Heart left ventricle (tissue), 16 donors: ENCODE measurements at regions of chr3 and their contacts with region 1.

Region 1: DNA sequence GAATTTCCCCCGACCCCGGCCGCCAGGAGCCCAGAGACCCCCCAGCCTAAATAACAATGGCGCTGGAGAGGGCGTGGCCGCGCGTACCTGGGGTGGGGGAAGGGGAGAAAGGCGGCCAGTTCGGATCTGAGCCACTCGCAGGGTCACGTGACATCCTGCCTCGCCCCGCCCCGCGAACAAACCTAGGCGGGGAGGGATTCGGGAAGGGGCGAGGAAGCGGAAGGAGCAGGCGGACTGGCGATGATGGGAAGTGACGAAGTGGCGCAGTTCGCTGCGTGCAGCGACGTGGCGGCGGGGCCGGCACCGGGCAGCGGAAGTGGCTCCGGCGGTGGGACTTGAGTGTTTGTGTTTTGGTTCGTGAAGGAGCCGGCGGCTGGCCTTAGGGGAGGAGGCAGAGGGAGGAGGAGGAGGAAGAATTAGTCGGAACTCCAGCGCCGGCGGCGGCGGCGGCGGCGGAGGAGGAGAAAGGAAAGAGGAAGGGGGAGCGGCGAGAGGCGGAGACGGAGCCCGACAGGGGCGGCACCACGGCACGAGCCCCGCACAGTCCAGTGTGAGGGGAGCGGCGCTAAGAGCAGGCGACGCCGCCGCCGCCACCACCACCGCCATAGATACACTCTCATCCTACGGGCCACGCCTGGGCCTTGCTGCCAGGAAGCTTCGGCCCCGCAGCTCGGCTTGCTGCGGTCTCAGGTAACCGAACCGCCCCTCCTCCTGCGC is at the start of gene RAB5A:
- DNase-seq: peak; percentile 98
- ATAC-seq: peak; percentile 97 to 99 (median 98)
- H3K4me3 ChIP-seq: peak within 1 kb of the TSS; percentile 65 to 99 (median 90)
- H3K27ac ChIP-seq: peak within 1 kb of the TSS; percentile 93 to 99 (median 98)
- H3K4me1 ChIP-seq: peaks cover 7 to 44% (median 25%) of the 10 kb centered on the region in 12 donors
- H3K27me3 ChIP-seq: no peaks in the 10 kb centered on the region
- CTCF ChIP-seq: no peak
- POLR2A ChIP-seq: peak in 1 of 2 donors; percentile 69
- total RNA-seq, gene RAB5A: 34.9 to 74.0 (median 61.9) TPM

Region 2: DNA sequence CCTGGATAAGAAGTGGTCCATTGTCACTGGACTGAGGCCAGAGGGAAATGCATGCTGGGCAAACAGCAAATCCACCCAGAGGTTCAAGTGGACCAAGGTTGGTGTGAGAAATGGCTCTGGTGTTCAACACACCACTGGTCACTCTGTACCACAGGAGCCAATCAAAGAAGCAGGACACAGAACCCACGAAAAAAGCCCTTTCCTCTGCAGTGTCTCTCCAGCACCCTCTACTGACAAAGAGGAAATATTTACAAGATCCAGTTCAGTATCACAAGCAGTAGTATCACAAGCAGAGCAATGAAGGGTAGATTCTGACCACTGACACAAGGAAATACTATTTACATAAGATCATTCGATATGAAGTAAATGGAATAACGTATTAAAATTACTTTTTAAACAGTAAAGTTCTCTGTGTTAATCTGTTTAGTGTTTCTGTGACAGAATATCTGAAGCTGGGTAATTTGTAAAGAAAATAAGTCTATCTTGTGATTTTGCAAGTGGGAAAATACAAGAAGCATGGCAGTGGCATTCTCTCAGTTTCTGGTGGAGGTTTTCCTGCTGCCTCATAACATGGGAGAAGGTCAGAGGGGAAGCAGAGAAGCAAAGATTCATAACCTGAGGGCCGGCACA is 403.7 kb before region 1 on chr3:
- intact Hi-C with region 1: no loop called
- DNase-seq: no peak
- ATAC-seq: peak; percentile 42 to 71 (median 58)
- H3K4me3 ChIP-seq: no peak overlapping the region
- H3K27ac ChIP-seq: no peak overlapping the region
- H3K4me1 ChIP-seq: no peaks in the 10 kb centered on the region
- H3K27me3 ChIP-seq: no peaks in the 10 kb centered on the region
- CTCF ChIP-seq: peak; percentile 32 to 62 (median 58)
- POLR2A ChIP-seq: no peak

Region 3: GRCh38 chr3:19885468-19885867 is 61.5 kb before region 1 on chr3:
- intact Hi-C with region 1: loop called in 5 of 10 experiments (anchors 5 kb)
- DNase-seq: no peak
- ATAC-seq: peak in 1 of 4 donors; percentile 29
- H3K4me3 ChIP-seq: no peak overlapping the region
- H3K27ac ChIP-seq: no peak overlapping the region
- H3K4me1 ChIP-seq: peaks cover 0 to 18% (median 8%) of the 10 kb centered on the region in 12 donors
- H3K27me3 ChIP-seq: no peaks in the 10 kb centered on the region
- CTCF ChIP-seq: peak; percentile 36 to 68 (median 48)
- POLR2A ChIP-seq: no peak

Region 4: DNA sequence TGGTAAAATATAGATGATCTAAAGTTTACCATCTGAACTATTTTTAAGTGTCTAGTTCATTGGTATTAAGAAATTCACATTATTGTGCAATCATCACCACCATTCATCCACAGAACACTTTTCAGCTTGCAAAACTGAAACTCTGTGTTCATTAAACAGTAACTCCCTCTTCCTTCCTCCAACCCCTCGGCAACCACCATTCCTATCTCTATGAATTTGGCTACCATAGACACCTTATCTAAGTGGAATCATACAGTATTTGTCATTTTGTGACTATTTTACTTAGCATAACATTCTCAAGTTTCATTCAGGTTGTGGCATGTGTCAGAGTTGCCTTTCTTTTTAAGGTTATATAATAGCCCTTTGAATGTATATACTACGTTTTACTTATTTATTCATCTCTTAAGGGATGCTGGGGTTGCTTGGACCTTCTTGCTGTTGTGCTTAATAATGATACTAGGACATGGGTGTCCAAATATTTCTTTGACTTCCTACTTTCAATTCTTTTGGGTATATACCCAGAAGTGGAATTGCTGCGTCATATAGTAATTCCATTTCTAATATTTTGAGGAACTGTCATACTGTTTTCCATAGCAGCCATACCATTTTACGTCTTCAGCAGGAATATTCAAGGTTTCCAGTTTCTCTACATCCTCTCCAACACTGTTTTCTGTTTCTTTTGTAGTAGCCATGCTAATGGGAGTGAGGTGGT is 114.1 kb after region 1 on chr3:
- intact Hi-C with region 1: no loop called
- DNase-seq: no peak
- ATAC-seq: peak in 3 of 4 donors; percentile 23 to 56 (median 38)
- H3K4me3 ChIP-seq: peak overlapping the region in 4 of 12 donors; percentile 5 to 36 (median 24)
- H3K27ac ChIP-seq: peak overlapping the region in 6 of 12 donors; percentile 12 to 90 (median 34)
- H3K4me1 ChIP-seq: peaks cover 14 to 74% (median 44%) of the 10 kb centered on the region in 12 donors
- H3K27me3 ChIP-seq: no peaks in the 10 kb centered on the region
- CTCF ChIP-seq: no peak
- POLR2A ChIP-seq: no peak

Region 5: DNA sequence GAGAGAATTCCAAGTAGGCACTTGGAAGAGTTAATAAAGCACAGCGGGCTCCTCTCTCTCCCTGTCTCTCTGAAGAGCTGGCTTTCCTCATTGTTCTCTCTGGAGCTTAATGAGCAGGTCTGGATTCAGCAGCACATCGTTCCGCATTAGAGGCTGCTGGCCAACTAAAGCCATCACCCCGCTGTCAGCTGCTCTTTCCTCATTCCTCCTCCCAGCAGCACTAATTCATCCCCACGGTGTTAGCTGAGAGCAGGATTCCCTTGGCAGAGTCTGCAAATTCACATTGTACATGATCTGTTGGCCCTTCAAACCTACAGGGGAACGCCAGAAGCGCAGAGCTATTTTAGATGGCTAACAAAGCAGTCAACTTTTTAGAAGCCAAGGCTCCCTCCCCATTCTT is 194.9 kb after region 1 on chr3:
- intact Hi-C with region 1: loop called in 1 of 10 experiments (anchors 10 kb)
- DNase-seq: peak in 4 of 5 donors; percentile 56 to 75 (median 69)
- ATAC-seq: peak; percentile 96 to 99 (median 98)
- H3K4me3 ChIP-seq: peak overlapping the region in 1 of 12 donors; percentile 27
- H3K27ac ChIP-seq: peak overlapping the region in 9 of 12 donors; percentile 20 to 77 (median 64)
- H3K4me1 ChIP-seq: peaks cover 0 to 18% (median 9%) of the 10 kb centered on the region in 12 donors
- H3K27me3 ChIP-seq: no peaks in the 10 kb centered on the region
- CTCF ChIP-seq: peak in 1 of 12 donors; percentile 12
- POLR2A ChIP-seq: no peak